B cell (primary cell): ENCODE measurements at regions of chr1 and their contacts with region 1.

Region 1: GRCh38 chr1:100459358-100460114 is 78.4 kb upstream of the GPR88 start:
- DNase-seq: peak; percentile 73
- ATAC-seq: peak; percentile 80
- H3K4me3 ChIP-seq: no peak overlapping the region
- H3K4me3 Mint-ChIP-seq: no peak overlapping the region
- H3K27ac ChIP-seq: no peak overlapping the region
- H3K27ac Mint-ChIP-seq: peak overlapping the region; percentile 2
- H3K4me1 ChIP-seq: peaks cover 13 to 17% of the 10 kb centered on the region in 2 donors
- H3K4me1 Mint-ChIP-seq: peaks cover 18% of the 10 kb centered on the region
- H3K27me3 ChIP-seq: no peaks in the 10 kb centered on the region
- H3K27me3 Mint-ChIP-seq: no peaks in the 10 kb centered on the region
- CTCF ChIP-seq: peak; percentile 85

Region 2: DNA sequence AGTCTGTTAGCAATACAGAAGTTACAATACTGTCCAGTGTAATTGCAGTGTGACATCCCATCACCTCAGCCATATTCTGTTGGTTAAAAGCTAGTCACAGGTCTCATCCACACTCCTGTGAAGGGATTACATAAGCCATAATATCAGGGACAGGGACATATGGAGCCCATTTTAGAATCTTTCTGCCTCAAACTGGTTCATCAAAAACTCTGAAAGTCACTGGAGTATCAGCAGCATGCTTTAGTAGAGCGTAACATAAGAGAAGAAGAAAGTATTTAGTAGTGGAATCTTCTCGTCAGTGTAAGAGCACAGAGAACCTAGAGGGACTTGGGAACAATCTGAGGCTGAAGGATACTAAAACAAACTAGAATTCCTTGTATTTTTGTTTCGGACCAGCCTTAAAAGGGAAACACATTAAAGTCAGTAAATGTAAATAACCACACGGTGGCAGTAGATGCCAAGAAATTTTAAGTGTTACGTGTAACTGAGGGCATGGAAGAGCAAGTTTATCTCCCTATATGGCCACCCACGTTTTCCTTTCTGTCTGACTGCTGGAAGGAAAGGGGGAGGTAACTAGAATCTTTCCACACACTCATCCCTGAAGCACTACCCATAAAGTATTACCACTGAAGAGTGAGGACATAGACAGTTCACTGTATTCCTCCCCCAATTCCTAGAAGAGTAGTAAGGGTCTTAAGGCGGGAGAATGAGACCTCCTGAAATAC is 651.0 kb before region 1 on chr1:
- CTCF ChIA-PET with region 1: interaction called, 35 read pairs
- POLR2A ChIA-PET with region 1: no interaction called
- intact Hi-C with region 1: no loop called
- DNase-seq: peak; percentile 78
- ATAC-seq: peak; percentile 56
- H3K4me3 ChIP-seq: no peak overlapping the region
- H3K4me3 Mint-ChIP-seq: no peak overlapping the region
- H3K27ac ChIP-seq: no peak overlapping the region
- H3K27ac Mint-ChIP-seq: no peak overlapping the region
- H3K4me1 ChIP-seq: peaks cover 0 to 6% of the 10 kb centered on the region in 2 donors
- H3K4me1 Mint-ChIP-seq: peaks cover 4% of the 10 kb centered on the region
- H3K27me3 ChIP-seq: peaks cover 0 to 4% (median 2%) of the 10 kb centered on the region in 4 experiments
- H3K27me3 Mint-ChIP-seq: peaks cover 31% of the 10 kb centered on the region
- CTCF ChIP-seq: peak; percentile 85

Region 3: GRCh38 chr1:100265931-100266740 is 193.4 kb before region 1 on chr1 and contains the start of gene RTCA:
- CTCF ChIA-PET with region 1: interaction called, 11 read pairs
- POLR2A ChIA-PET with region 1: interaction called, 7 read pairs
- intact Hi-C with region 1: no loop called
- DNase-seq: peak; percentile 96
- ATAC-seq: peak; percentile 95
- H3K4me3 ChIP-seq: peak within 1 kb of the TSS; percentile 74 to 98 (median 94)
- H3K4me3 Mint-ChIP-seq: peak within 1 kb of the TSS; percentile 100
- H3K27ac ChIP-seq: peak within 1 kb of the TSS; percentile 58 to 81
- H3K27ac Mint-ChIP-seq: peak within 1 kb of the TSS; percentile 98
- H3K4me1 ChIP-seq: peaks cover 15 to 21% of the 10 kb centered on the region in 2 donors
- H3K4me1 Mint-ChIP-seq: peaks cover 38% of the 10 kb centered on the region
- H3K27me3 ChIP-seq: no peaks in the 10 kb centered on the region
- H3K27me3 Mint-ChIP-seq: no peaks in the 10 kb centered on the region
- CTCF ChIP-seq: no peak
- total RNA-seq, gene RTCA: 31.0 and 40.2 TPM in 2 replicates

Region 4: GRCh38 chr1:100351095-100351891 is 108.2 kb before region 1 on chr1:
- CTCF ChIA-PET with region 1: interaction called, 13 read pairs
- POLR2A ChIA-PET with region 1: no interaction called
- intact Hi-C with region 1: no loop called
- DNase-seq: peak; percentile 91
- ATAC-seq: peak; percentile 58
- H3K4me3 ChIP-seq: peak overlapping the region; percentile 85 to 99 (median 97)
- H3K4me3 Mint-ChIP-seq: peak overlapping the region; percentile 91
- H3K27ac ChIP-seq: peak overlapping the region; percentile 52 to 87
- H3K27ac Mint-ChIP-seq: peak overlapping the region; percentile 92
- H3K4me1 ChIP-seq: peaks cover 10 to 16% of the 10 kb centered on the region in 2 donors
- H3K4me1 Mint-ChIP-seq: peaks cover 37% of the 10 kb centered on the region
- H3K27me3 ChIP-seq: no peaks in the 10 kb centered on the region
- H3K27me3 Mint-ChIP-seq: no peaks in the 10 kb centered on the region
- CTCF ChIP-seq: no peak

Region 5: GRCh38 chr1:100423832-100424337 is 35.7 kb before region 1 on chr1:
- CTCF ChIA-PET with region 1: interaction called, 14 read pairs
- POLR2A ChIA-PET with region 1: no interaction called
- intact Hi-C with region 1: no loop called
- DNase-seq: peak; percentile 26
- ATAC-seq: peak; percentile 69
- H3K4me3 ChIP-seq: peak overlapping the region in 1 of 5 experiments; percentile 29
- H3K4me3 Mint-ChIP-seq: peak overlapping the region; percentile 58
- H3K27ac ChIP-seq: peak overlapping the region; percentile 45 to 59
- H3K27ac Mint-ChIP-seq: peak overlapping the region; percentile 76
- H3K4me1 ChIP-seq: peaks cover 7 to 12% of the 10 kb centered on the region in 2 donors
- H3K4me1 Mint-ChIP-seq: peaks cover 34% of the 10 kb centered on the region
- H3K27me3 ChIP-seq: no peaks in the 10 kb centered on the region
- H3K27me3 Mint-ChIP-seq: no peaks in the 10 kb centered on the region
- CTCF ChIP-seq: peak; percentile 18

Region 6: DNA sequence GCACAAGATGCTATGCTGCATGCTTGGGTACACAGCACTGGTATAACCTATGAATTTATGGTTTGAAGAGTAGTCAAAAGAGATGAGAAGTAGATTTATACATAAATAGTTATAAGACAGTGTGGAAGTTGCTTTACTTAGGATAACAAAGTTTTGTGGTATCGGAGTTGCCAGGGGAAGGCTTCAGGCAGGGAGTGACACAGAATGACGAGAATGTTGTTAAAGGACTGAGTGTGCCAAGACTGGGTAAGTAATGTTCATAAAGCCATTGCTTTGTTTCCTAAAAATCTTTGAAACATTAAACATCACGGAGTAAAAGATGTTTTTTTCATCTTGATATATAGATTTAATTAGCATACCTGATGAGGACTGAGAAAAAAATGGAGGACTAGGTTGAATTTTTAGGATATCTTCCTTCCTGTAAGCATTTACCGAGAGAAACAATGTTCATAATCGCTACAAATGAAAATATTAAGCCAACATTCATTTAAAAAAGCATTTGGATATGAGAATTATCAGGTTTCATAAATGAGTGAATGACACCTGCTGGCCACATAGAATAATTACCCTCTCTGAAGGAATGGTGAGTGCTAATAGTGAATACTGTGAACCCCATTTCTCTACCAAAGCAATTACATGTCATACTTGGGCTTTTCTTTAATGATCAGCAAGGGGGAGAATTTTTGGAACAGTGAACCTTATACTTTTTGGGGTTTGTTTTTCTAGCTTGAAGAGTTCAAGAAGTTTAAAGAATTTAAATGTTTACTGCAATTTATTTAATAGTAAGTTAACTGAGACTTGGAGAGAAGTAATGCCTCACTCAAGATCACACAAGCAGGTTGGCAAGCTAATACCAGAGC is 406.7 kb after region 1 on chr1:
- CTCF ChIA-PET with region 1: interaction called, 31 read pairs
- POLR2A ChIA-PET with region 1: no interaction called
- intact Hi-C with region 1: loop called (anchors 1 kb)
- DNase-seq: peak; percentile 40
- ATAC-seq: no peak
- H3K4me3 ChIP-seq: no peak overlapping the region
- H3K4me3 Mint-ChIP-seq: no peak overlapping the region
- H3K27ac ChIP-seq: no peak overlapping the region
- H3K27ac Mint-ChIP-seq: no peak overlapping the region
- H3K4me1 ChIP-seq: no peaks in the 10 kb centered on the region
- H3K4me1 Mint-ChIP-seq: no peaks in the 10 kb centered on the region
- H3K27me3 ChIP-seq: peaks cover 0 to 6% (median 2%) of the 10 kb centered on the region in 4 experiments
- H3K27me3 Mint-ChIP-seq: no peaks in the 10 kb centered on the region
- CTCF ChIP-seq: peak; percentile 74